Activated CD4-positive, alpha-beta memory T cell treated with anti-CD3 and anti-CD28 coated beads for 36 hours (primary cell): ENCODE measurements at regions of chr12 and their contacts with region 1.

Region 1: DNA sequence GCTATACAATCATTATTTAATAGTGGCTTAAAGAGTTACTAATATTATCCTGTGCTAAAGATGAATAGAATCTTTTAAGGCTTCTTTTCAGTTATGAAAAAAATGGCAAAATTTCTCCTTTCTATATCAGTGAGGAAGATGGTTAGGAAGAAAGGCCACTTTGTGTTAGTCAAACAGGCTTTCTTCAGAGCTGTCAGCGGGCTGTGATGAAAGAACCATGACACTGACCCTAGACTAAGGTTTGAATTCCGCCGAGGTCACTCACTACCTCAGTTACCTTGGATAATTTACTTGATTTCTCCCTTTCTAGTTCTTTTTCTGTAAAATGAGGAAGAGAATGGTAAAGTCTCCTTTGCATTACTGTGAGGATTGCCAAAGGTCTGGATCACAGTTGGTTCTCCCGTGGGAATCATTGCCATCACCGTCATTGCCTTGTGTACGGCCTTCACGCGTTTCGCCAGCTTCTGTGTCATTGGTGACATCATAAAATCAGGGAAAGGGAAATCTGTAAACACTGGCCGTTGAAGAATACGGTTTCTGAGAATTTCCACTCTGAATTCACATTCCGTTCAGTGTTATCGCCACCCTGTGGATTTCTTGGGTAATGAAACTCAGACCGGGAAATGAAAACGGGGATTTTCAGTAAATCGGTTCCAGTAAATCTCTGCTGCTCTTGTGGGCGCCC is 26.7 kb upstream of the YBX3 start:
- DNase-seq: peak; percentile 78
- H3K4me3 Mint-ChIP-seq: peak overlapping the region; percentile 40
- H3K27ac Mint-ChIP-seq: peak overlapping the region; percentile 1
- H3K4me1 Mint-ChIP-seq: peaks cover 8% of the 10 kb centered on the region
- H3K27me3 Mint-ChIP-seq: peaks cover 38% of the 10 kb centered on the region

Region 2: DNA sequence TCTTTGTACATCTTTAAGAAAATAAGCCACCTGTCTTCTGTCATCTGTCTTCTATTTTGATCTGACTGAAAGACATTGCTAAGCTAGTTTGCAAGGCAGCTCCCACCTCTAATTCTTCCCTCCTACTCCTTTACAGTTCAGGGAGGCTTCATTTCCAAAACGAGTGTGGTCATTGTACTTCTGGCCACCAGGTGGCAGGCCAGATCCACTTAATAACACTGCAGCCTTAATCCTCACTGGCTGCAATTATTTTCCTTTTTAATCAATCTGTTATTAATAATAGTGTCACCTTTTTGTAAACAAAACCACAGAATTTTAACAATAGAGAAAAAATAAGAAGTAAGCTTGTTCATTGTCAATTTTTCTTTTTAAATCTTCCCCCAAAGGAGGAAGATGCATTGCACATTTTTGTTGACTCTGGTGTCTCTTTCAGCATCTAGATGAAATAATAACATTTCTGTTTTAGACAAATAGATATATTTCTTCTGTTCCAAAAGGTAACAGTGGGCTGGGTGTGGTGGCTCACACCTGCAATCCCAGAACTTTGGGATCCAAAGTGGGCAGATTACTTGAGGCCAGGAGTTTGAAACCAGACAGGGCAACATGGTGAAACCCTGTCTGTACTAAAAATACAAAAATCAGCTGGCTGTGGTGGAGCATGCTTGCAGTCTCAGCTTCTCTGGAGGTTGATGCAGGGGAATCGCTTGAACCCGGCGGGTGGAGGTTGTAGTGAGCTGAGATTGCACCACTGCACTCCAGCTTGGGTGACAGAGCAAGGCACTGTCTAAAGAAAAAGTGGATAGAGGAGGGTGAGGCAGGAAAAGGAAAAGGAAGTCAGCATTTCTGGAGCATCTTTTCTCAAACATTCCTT is 513.8 kb before region 1 on chr12:
- CTCF ChIA-PET with region 1: interaction called, 10 read pairs
- POLR2A ChIA-PET with region 1: no interaction called
- intact Hi-C with region 1: loop called (anchors 5 kb)
- DNase-seq: peak; percentile 47
- H3K4me3 Mint-ChIP-seq: no peak overlapping the region
- H3K27ac Mint-ChIP-seq: no peak overlapping the region
- H3K4me1 Mint-ChIP-seq: no peaks in the 10 kb centered on the region
- H3K27me3 Mint-ChIP-seq: peaks cover 3% of the 10 kb centered on the region

Region 3: DNA sequence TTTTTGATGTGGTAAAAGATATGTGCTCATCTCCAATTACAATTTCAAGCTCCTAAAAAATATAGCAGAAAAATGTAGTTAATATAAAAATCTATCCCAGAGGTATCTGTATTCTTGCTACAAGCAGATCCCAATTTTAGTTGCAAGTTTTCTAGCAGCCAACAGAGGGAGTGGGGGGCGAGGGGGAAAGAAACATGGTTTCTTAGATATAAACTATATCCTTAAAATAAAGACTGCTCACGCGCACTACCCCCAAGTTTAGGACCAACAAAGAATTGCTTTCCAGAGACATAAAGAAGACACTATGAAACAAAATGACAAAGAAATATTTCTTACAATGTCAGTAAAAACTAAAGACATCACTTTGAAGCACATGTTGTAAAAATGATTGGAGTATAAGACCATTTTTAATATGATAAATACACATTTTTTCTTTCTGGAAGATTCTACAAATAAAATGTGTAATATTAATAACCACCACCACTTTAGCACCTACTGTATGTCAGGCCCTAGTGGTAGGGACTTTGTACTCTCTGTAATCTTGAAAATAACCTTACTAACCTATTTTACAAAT is 141.9 kb before region 1 on chr12:
- CTCF ChIA-PET with region 1: interaction called, 12 read pairs
- POLR2A ChIA-PET with region 1: no interaction called
- intact Hi-C with region 1: loop called (anchors 1 kb)
- DNase-seq: no peak
- H3K4me3 Mint-ChIP-seq: no peak overlapping the region
- H3K27ac Mint-ChIP-seq: no peak overlapping the region
- H3K4me1 Mint-ChIP-seq: peaks cover 23% of the 10 kb centered on the region
- H3K27me3 Mint-ChIP-seq: no peaks in the 10 kb centered on the region

Region 4: DNA sequence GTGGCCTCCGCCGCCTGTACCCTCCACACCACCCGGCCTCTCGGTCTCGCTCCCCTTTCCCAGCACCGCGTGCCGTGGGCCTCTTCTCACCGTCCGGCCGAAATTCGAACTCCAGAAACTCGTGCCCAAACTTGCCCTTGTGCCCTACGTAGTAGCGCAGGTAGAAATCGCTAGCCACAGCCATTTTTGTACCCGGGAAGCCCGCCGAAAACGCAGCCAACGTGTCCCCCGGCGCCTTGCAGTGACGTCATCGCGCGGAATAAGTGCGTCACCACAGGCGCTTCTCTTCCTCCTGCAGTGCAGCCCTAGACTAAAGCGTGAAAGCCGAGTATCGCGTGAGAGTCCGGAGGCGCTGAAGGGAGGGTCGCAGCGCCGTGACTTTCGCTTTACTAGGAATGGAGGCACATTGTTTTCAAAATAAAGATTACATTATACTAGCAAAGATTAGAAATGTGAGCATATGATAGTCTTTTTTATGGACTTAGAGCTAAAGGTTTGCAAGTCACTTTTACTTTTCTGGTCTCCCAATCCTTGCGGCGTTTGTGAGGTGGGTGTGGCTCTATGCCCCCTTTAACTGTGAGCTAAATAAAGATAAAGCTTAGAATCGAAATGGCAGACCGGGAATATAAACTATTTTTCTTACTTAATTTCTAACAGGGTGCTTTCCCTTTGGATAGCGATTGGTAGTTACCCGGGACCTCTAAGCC is 136.3 kb before region 1 on chr12 and contains the start of gene MAGOHB:
- CTCF ChIA-PET with region 1: interaction called, 12 read pairs
- POLR2A ChIA-PET with region 1: no interaction called
- intact Hi-C with region 1: loop called (anchors 1 kb)
- DNase-seq: peak; percentile 99
- H3K4me3 Mint-ChIP-seq: peak within 1 kb of the TSS; percentile 98
- H3K27ac Mint-ChIP-seq: peak within 1 kb of the TSS; percentile 99
- H3K4me1 Mint-ChIP-seq: peaks cover 34% of the 10 kb centered on the region
- H3K27me3 Mint-ChIP-seq: peaks cover 8% of the 10 kb centered on the region
- total RNA-seq, gene MAGOHB: 66.2 to 69.1 TPM

Region 5: GRCh38 chr12:10673660-10674384 is 76.0 kb before region 1 on chr12 and contains the start of gene STYK1:
- CTCF ChIA-PET with region 1: interaction called, 6 read pairs
- POLR2A ChIA-PET with region 1: no interaction called
- intact Hi-C with region 1: loop called (anchors 1 kb)
- DNase-seq: peak; percentile 78
- H3K4me3 Mint-ChIP-seq: peak within 1 kb of the TSS; percentile 67
- H3K27ac Mint-ChIP-seq: no peak within 1 kb of the TSS
- H3K4me1 Mint-ChIP-seq: peaks cover 26% of the 10 kb centered on the region
- H3K27me3 Mint-ChIP-seq: peaks cover 38% of the 10 kb centered on the region
- total RNA-seq, gene STYK1: not detected

Region 6: GRCh38 chr12:10721651-10722501 is 28.0 kb before region 1 on chr12:
- CTCF ChIA-PET with region 1: interaction called, 5 read pairs
- POLR2A ChIA-PET with region 1: no interaction called
- intact Hi-C with region 1: loop called (anchors 1 kb)
- DNase-seq: peak; percentile 69
- H3K4me3 Mint-ChIP-seq: peak overlapping the region; percentile 93
- H3K27ac Mint-ChIP-seq: peak overlapping the region; percentile 86
- H3K4me1 Mint-ChIP-seq: peaks cover 20% of the 10 kb centered on the region
- H3K27me3 Mint-ChIP-seq: peaks cover 53% of the 10 kb centered on the region

Region 7: DNA sequence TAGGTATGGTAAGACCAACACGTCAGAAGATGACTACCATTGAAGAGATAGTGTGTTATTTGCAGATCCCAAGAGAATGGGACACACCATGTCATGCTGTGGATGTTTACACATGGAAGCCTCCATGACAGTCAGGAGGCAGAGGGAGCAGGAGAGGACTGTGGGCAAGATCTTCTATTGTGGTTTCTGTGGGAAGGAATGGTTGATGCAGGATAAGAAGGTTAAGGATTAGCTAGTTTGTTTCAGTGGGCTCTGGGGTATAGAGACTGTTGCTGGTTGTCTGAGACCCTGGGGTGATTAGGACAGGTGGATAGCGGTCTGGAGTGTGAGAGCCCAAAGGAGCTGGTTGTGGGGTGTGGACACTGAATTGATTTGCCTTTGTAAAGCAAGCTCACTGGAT is 29.3 kb after region 1 on chr12:
- CTCF ChIA-PET with region 1: no interaction called
- POLR2A ChIA-PET with region 1: no interaction called
- intact Hi-C with region 1: no loop called
- DNase-seq: no peak
- H3K4me3 Mint-ChIP-seq: no peak overlapping the region
- H3K27ac Mint-ChIP-seq: no peak overlapping the region
- H3K4me1 Mint-ChIP-seq: no peaks in the 10 kb centered on the region
- H3K27me3 Mint-ChIP-seq: peaks cover 10% of the 10 kb centered on the region

Region 8: DNA sequence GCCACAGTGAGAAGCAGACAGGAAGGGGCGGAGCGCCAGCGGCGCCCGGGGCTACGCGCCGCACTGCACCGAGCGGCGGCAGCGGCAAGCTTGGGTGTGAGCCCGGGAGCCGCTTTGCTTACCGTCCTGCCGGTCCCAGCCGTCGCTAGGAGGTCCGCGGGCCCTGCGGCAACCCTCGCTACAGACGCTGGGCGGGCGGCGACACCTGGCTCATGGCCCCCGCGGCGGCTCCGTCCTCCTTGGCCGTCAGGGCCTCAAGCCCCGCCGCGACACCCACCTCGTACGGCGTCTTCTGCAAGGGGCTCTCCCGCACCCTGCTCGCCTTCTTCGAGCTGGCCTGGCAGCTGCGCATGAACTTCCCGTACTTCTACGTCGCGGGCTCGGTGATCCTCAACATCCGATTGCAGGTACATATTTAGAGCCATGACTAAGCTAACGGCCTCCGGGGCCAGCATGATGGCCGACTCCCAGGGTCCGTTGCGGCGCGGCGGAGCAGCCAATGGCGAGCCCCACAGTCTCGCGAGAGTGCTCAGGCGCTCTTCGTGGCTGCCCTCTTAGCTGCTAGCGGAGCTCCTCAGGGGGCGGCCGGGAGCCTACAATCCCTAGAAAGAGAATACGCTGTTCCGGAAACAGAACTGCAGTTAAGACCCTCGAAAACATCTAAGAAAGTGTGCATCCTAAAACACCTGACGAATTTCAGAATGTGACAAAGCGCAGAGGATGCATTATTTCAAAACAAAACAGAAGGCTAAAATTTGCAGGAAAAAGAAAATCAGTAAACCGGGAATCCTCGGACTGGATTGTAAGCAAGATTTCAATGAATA is 421.5 kb after region 1 on chr12 and contains the start of gene SMIM10L1:
- CTCF ChIA-PET with region 1: interaction called, 7 read pairs
- POLR2A ChIA-PET with region 1: no interaction called
- intact Hi-C with region 1: loop called (anchors 5 kb)
- DNase-seq: peak; percentile 93
- H3K4me3 Mint-ChIP-seq: peak within 1 kb of the TSS; percentile 96
- H3K27ac Mint-ChIP-seq: peak within 1 kb of the TSS; percentile 99
- H3K4me1 Mint-ChIP-seq: peaks cover 42% of the 10 kb centered on the region
- H3K27me3 Mint-ChIP-seq: no peaks in the 10 kb centered on the region
- total RNA-seq, gene SMIM10L1: 5.9 to 6.5 TPM